Posterior vena cava (tissue), 2 donors: ENCODE measurements at regions of chr7 and their contacts with region 1.

Region 1: GRCh38 chr7:46264646-46265045 is 343.6 kb upstream of the IGFBP3 start:
- DNase-seq: no peak

Region 2: GRCh38 chr7:46282155-46282554 is 17.5 kb after region 1 on chr7:
- intact Hi-C with region 1: loop called in 1 of 2 experiments (anchors 1 kb)
- DNase-seq: no peak